ENCODE measurements at regions of chr4 and their contacts with region 1.

Region 1: DNA sequence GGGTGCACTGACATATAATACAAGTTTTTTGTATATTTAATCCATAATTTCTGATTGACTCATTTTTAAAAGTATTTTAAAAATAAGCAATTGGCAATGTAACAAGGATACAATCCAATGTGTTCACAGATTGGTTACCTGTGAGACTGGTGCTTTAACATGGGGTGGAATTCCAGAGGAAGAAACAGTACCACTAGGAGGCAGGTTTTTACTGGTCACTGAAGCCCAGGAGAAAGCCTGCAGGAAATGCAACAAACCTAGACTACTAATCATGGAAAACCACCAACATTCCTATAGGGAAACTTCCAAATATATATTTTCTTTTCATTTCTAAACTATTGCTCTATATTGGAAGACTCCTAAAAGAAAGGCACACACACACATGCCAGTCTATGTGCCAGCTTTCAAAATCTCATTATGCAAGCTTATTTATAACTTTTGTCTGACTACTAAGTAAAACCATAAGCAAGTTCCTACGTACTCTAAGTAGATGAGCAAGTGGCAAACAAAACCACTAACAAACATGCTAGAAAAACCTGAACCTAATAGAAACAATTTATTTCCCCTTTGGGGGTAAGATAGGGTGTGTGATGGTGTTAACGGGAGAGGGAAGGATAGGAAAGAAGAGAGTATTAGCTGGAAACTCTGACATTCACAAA is 19.2 kb downstream of the G3BP2 start:
- DNase-seq: no peak
- H3K4me3 Mint-ChIP-seq: peak overlapping the region; percentile 41
- H3K27ac Mint-ChIP-seq: peak overlapping the region; percentile 93
- H3K4me1 Mint-ChIP-seq: peaks cover 50% of the 10 kb centered on the region
- H3K27me3 Mint-ChIP-seq: no peaks in the 10 kb centered on the region

Region 2: DNA sequence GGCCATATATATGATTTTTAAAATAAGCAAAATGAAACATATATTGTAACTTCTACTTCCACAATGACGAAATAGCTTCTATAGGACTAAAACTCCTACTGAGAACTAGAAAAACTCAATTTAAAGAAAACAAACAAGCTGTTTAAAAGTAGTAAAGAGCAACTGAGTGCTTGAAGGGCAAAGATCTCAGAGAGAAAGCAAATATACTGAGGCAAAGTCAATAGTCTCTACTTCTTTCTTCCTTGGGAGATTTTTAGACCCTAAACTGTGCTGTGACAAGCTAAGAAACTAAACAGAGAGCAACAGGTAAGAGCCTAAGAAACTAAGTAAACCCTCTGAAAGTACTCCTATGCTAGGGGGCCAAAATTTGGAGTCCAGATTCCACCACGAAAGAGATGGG is 148.3 kb before region 1 on chr4:
- intact Hi-C with region 1: no loop called
- DNase-seq: no peak
- H3K4me3 Mint-ChIP-seq: no peak overlapping the region
- H3K27ac Mint-ChIP-seq: no peak overlapping the region
- H3K4me1 Mint-ChIP-seq: peaks cover 25% of the 10 kb centered on the region
- H3K27me3 Mint-ChIP-seq: no peaks in the 10 kb centered on the region

Region 3: DNA sequence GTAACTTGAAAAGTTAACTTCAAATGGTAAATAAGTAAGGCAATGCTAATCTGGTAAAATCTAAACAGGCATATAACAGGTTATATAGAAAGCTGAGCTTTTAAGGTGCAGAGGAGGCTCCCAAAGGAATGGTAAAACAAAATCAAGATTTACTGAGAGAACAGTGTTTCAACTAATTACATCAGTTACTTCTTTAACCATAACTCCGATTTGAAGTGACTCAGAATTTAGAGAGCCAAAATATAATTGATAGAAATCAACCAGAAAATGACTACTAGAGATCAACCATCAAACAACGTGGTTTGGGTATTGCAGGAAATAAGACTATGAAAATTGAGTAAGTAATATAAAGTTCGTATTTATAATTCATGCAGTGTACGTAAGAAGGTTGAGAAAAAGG is 12.3 kb after region 1 on chr4:
- intact Hi-C with region 1: loop called (anchors 1 kb)
- DNase-seq: no peak
- H3K4me3 Mint-ChIP-seq: peak overlapping the region; percentile 22
- H3K27ac Mint-ChIP-seq: no peak overlapping the region
- H3K4me1 Mint-ChIP-seq: peaks cover 71% of the 10 kb centered on the region
- H3K27me3 Mint-ChIP-seq: no peaks in the 10 kb centered on the region

Region 4: DNA sequence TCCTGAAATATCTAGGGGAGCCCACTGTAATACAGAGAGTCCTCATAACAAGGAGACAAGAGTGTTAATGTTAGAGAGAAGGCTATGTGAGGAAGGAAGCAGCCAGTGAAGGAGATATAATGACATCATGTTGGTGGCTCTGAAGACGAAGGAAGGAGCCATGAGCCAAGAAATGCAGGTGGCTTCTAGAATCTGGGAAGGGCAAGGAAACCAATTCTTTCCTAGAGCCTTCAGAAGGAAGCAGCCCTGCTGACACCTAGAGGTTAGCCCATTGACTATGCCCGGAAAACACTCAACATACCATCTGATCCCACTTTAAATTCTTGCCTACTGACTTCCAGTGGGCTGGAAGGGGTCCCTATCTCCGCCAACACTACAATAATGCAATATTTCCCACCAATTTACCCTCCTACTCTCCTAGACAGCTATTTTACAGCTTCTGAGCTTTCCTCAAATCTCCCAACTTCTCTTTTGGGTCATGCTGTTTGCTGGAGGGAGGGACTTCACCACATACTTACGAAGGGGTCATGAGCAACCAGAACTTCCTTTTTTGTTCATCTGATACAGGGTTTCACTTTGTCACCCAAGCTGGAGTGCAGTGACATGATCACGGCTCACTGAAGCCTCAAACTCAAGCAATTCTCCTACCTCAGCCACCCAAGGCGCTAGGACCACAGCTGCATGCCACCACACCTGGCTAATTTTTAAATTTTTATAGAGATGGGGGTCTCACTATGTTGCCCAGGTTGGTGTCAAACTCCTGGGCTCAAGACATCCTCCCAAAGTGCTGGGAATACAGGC is 44.4 kb after region 1 on chr4:
- intact Hi-C with region 1: loop called (anchors 1 kb)
- DNase-seq: no peak
- H3K4me3 Mint-ChIP-seq: peak overlapping the region; percentile 7
- H3K27ac Mint-ChIP-seq: peak overlapping the region; percentile 86
- H3K4me1 Mint-ChIP-seq: peaks cover 30% of the 10 kb centered on the region
- H3K27me3 Mint-ChIP-seq: no peaks in the 10 kb centered on the region

Region 5: GRCh38 chr4:75849461-75849860 is 195.5 kb after region 1 on chr4:
- intact Hi-C with region 1: loop called (anchors 2 kb)
- DNase-seq: no peak
- H3K4me3 Mint-ChIP-seq: no peak overlapping the region
- H3K27ac Mint-ChIP-seq: peak overlapping the region; percentile 19
- H3K4me1 Mint-ChIP-seq: peaks cover 12% of the 10 kb centered on the region
- H3K27me3 Mint-ChIP-seq: no peaks in the 10 kb centered on the region

Measured in activated T-helper 1 cell treated with anti-CD3 and anti-CD28 coated beads, Interleukin-12 subunit alpha, Interleukin-12 subunit beta, Interleukin-2, Interleukin-4 antibody, amounts not matched to agents 30 ng/mL and 10 ng/mL and 1 ng/mL, durations not matched to agents 14 hours and 24 hours and 36 hours (primary cell).